ENCODE measurements at regions of chr7 and their contacts with region 1.

Region 1: DNA sequence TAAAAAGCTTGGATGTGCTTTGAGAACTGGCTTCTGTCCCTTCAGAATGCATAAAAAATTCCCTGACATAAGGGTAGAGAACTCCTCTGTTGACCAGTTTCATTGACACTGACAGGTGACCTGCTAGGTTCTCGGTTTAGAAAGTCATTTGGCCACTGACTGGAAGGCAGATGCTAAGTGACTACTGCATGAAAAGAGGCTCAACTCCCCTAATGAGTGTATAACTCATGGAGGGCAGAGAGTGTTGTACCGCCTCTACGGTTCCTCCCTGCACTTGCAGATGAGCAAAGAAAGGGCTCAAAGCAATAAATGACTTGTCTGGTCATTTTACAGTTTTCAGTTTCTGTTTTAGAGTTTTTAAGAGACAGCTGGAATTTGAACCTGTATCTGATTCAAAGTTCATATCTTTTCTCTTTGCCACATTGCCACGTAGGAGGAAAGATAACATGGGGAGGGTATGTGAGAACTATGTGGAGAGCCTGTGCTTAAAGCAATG is 2.9 kb upstream of the FGL2 start:
- DNase-seq: no peak
- H3K4me3 ChIP-seq: no peak overlapping the region
- H3K27me3 ChIP-seq: no peaks in the 10 kb centered on the region; the same call in 1 of the 2 replicates
- CTCF ChIP-seq: no peak

Region 2: DNA sequence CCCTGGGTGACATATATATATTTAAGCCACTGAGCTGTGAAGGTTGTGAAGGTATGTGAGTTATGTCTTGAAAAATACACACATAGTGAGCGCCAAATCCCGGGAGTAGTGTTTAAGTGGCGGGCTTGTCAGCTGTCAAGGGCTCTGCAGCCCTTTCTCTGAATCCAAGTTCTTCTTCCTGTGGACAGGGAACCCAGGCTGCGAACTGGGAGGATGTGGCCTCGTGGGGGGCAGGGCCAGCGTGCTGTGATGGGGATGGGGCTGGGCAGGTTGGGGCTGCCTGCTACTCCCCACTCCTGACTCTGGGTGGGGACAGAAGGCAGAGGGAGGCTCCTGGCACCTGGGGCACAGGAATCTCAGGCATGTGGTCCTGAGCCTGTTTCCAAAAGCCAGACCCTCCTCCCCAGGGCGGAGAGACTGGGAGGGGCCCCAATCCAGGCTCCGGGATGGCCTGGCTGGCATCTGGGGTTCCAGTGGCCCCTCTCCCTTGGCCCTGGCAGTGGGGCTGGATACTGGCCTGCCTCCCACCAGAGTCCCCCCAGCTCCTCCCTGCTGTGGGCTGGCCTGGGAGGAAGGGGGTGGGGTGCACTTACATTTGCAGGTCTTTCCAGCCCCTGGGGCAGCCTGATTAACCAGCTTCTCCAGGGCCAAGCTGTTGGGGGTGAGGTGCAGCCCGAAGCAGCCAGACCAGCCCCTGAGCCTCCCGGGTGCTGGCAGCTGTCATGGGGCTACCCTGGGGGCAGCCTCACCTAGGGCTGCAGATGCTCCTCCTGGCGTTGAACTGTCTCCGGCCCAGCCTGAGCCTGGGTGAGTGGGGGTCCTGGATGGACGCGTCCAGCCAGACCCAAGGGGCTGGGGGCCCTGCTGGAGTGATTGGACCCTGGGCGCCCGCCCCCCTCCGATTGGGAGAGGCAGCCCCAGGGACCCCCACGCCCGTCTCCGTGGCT is 692.3 kb before region 1 on chr7 and contains the start of gene UPK3B:
- CTCF ChIA-PET with region 1: no interaction called
- POLR2A ChIA-PET with region 1: interaction called, 21 read pairs
- DNase-seq: no peak
- H3K4me3 ChIP-seq: no peak within 1 kb of the TSS
- H3K27me3 ChIP-seq: no peaks in the 10 kb centered on the region
- CTCF ChIP-seq: no peak
- polyA plus RNA-seq, gene UPK3B: not detected in 2 replicates